HepG2 (cell line): ENCODE measurements at regions of chr16 and their contacts with region 1.

Region 1: GRCh38 chr16:84726079-84726668 is 26.4 kb downstream of the USP10 start:
- DNase-seq: peak; percentile 70
- ATAC-seq: peak; percentile 91
- H3K4me3 ChIP-seq: peak overlapping the region; percentile 37 to 69 (median 46)
- H3K27ac ChIP-seq: peak overlapping the region; percentile 45
- H3K4me1 ChIP-seq: peaks cover 93% of the 10 kb centered on the region
- H3K27me3 ChIP-seq: no peaks in the 10 kb centered on the region
- CTCF ChIP-seq: peak; percentile 97
- EP300 ChIP-seq: no peak
- POLR2A ChIP-seq: no peak
- RAD21 ChIP-seq: peak; percentile 89

Region 2: GRCh38 chr16:84511180-84511824 is 214.9 kb before region 1 on chr16:
- CTCF ChIA-PET with region 1: interaction called, 7 read pairs
- POLR2A ChIA-PET with region 1: no interaction called
- in situ Hi-C with region 1: loop called (anchors 10 kb)
- intact Hi-C with region 1: loop called (anchors 5 kb)
- DNase-seq: peak; percentile 68
- ATAC-seq: peak; percentile 65
- H3K4me3 ChIP-seq: no peak overlapping the region
- H3K27ac ChIP-seq: no peak overlapping the region
- H3K4me1 ChIP-seq: peaks cover 37% of the 10 kb centered on the region
- H3K27me3 ChIP-seq: no peaks in the 10 kb centered on the region; a peak in 1 of 5 replicates
- CTCF ChIP-seq: peak; percentile 98
- EP300 ChIP-seq: no peak
- POLR2A ChIP-seq: no peak
- RAD21 ChIP-seq: peak; percentile 91

Region 3: GRCh38 chr16:84617791-84618580 is 108.2 kb before region 1 on chr16 and contains the start of gene COTL1:
- CTCF ChIA-PET with region 1: interaction called, 38 read pairs
- POLR2A ChIA-PET with region 1: no interaction called
- in situ Hi-C with region 1: loop called (anchors 5 kb)
- intact Hi-C with region 1: loop called (anchors 1 kb)
- DNase-seq: peak; percentile 87
- ATAC-seq: peak; percentile 76
- H3K4me3 ChIP-seq: peak within 1 kb of the TSS; percentile 76 to 89 (median 85)
- H3K27ac ChIP-seq: no peak within 1 kb of the TSS
- H3K4me1 ChIP-seq: peaks cover 52% of the 10 kb centered on the region
- H3K27me3 ChIP-seq: no peaks in the 10 kb centered on the region; a peak in 1 of 5 replicates
- CTCF ChIP-seq: no peak
- EP300 ChIP-seq: no peak; a peak in 1 of 4 replicates
- POLR2A ChIP-seq: peak in 1 of 2 experiments; percentile 58; a peak in 1 of 4 replicates
- RAD21 ChIP-seq: peak; percentile 32; the same call in 1 of the 2 replicates
- total RNA-seq, gene COTL1: 8.6 and 8.7 TPM in 2 replicates

Region 4: GRCh38 chr16:84643180-84643583 is 83.0 kb before region 1 on chr16:
- CTCF ChIA-PET with region 1: interaction called, 3 read pairs
- POLR2A ChIA-PET with region 1: no interaction called
- in situ Hi-C with region 1: no loop called
- intact Hi-C with region 1: loop called (anchors 1 kb)
- DNase-seq: peak; percentile 35
- ATAC-seq: peak; percentile 38
- H3K4me3 ChIP-seq: peak overlapping the region in 1 of 3 experiments; percentile 30; a peak in 1 of 6 replicates
- H3K27ac ChIP-seq: no peak overlapping the region
- H3K4me1 ChIP-seq: peaks cover 50% of the 10 kb centered on the region
- H3K27me3 ChIP-seq: peaks cover 0 to 34% of the 10 kb centered on the region in 2 experiments; a peak in 2 of 5 replicates
- CTCF ChIP-seq: no peak
- EP300 ChIP-seq: no peak
- POLR2A ChIP-seq: no peak
- RAD21 ChIP-seq: no peak

Region 5: DNA sequence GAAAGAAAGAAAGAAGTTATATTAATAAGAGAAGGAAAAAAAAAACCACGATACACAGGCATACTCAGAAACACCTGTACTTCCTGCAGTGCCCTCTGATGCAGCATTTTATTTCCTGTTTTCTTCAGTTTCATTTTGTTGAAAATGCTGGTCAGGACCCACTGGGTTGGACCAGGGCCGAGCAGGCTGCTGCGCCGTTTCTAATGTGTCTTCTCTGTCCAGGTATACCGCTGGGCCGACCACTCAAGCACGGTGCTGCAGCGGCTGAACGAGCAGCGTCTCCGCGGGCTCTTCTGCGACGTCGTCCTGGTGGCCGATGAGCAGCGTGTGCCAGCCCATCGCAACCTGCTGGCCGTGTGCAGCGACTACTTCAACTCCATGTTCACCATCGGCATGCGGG is 69.5 kb before region 1 on chr16:
- CTCF ChIA-PET with region 1: no interaction called
- POLR2A ChIA-PET with region 1: no interaction called
- in situ Hi-C with region 1: no loop called
- intact Hi-C with region 1: no loop called
- DNase-seq: no peak
- ATAC-seq: no peak
- H3K4me3 ChIP-seq: no peak overlapping the region
- H3K27ac ChIP-seq: no peak overlapping the region
- H3K4me1 ChIP-seq: no peaks in the 10 kb centered on the region
- H3K27me3 ChIP-seq: no peaks in the 10 kb centered on the region
- CTCF ChIP-seq: no peak
- EP300 ChIP-seq: no peak
- POLR2A ChIP-seq: no peak
- RAD21 ChIP-seq: no peak

Region 6: DNA sequence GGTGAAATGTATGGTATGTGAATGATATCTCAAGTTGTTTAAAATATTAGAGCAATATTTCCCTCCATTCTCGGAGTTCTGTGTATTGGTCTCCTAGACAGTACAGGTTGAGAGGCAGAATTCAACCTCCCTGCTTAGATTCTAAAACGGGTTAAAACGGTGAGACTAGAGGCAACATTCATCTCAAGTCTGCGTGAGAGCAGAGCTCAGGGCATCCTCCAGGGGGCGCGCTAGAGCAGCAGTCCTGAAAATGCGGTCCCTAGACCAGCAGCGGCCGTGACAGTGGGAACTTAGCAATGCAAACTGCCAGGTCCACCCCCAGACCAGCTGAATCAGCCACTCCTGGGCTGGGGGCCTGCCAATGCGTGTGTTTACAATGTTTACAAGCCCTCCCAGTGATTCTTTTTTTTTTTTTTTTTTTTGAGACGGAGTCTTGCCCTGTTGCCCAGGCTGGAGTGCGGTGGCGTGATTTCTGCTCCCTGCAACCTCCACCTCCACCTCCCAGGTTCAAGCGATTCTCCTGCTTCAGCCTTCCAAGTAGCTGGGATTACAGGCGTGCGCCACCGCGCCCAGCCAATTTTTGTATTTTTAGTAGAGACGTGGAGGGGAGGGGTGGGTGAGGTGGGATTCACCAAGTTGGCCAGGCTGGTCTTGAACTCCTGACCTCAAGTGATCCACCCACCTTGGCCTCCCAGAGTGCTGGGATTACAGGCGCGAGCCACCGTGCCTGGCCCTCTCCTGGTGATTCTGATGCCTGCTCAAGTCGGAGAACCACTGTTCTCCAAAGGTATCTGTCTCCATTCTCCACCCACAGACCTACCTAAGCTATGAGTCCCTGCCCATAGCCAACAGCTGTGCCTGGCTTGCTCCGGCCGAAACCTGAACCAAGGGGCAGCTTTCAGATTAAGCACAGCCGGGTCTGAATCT is 53.6 kb before region 1 on chr16:
- CTCF ChIA-PET with region 1: interaction called, 69 read pairs
- POLR2A ChIA-PET with region 1: interaction called, 4 read pairs
- in situ Hi-C with region 1: loop called (anchors 5 kb)
- intact Hi-C with region 1: loop called (anchors 1 kb)
- DNase-seq: peak; percentile 58
- ATAC-seq: peak; percentile 82
- H3K4me3 ChIP-seq: 0 out of 6 replicates have a peak overlapping the region, but pooled peaks of 1 of the 3 experiments have one; percentile 29
- H3K27ac ChIP-seq: no peak overlapping the region
- H3K4me1 ChIP-seq: peaks cover 34% of the 10 kb centered on the region
- H3K27me3 ChIP-seq: 0 out of 5 replicates have a peak, but pooled peaks cover 0 to 21% of the 10 kb centered on the region in 2 experiments
- CTCF ChIP-seq: peak; percentile 95
- EP300 ChIP-seq: no peak
- POLR2A ChIP-seq: no peak
- RAD21 ChIP-seq: peak; percentile 86

Region 7: DNA sequence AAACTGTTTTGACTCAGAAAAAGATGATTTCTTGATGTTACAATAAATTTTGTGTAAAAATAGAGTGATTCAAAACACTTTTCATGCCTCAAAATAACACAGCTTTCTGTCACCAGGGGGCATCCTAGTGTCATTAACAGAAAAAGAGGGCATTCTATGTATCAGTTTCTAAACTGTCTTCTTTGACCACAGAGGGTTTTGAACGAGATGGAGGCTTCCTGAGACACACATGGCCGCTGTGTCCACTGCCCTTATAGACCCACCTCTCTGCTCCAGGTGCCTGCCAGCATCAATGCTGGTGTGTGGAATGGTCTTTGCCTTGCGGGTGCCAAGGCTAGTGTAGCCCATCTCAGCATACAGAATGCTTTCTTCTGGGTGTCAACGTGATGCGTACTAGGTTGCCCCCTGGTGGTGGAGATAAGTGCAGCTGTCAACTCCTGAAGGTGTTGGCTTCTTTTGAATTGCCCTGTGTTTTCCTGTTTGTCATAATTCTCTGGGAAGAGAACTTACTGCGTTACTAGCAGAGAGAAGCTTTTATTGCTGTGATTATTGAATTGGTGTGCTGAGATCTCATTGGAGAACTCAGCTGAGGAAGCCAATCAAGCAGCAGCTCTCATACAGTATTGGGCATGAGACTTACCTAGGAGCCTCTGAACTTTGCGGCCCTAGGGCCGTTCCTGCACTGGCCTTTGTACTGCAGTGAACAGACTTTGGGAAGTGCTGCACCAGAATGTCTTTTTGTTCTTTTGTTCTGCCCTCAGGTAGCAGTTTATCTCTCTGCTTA is 12.3 kb after region 1 on chr16:
- CTCF ChIA-PET with region 1: interaction called, 10 read pairs
- POLR2A ChIA-PET with region 1: interaction called, 5 read pairs
- in situ Hi-C with region 1: no loop called
- intact Hi-C with region 1: no loop called
- DNase-seq: peak; percentile 78
- ATAC-seq: peak; percentile 76
- H3K4me3 ChIP-seq: no peak overlapping the region
- H3K27ac ChIP-seq: peak overlapping the region; percentile 7
- H3K4me1 ChIP-seq: peaks cover 66% of the 10 kb centered on the region
- H3K27me3 ChIP-seq: no peaks in the 10 kb centered on the region
- CTCF ChIP-seq: peak; percentile 93
- EP300 ChIP-seq: no peak
- POLR2A ChIP-seq: no peak
- RAD21 ChIP-seq: peak; percentile 39

Region 8: DNA sequence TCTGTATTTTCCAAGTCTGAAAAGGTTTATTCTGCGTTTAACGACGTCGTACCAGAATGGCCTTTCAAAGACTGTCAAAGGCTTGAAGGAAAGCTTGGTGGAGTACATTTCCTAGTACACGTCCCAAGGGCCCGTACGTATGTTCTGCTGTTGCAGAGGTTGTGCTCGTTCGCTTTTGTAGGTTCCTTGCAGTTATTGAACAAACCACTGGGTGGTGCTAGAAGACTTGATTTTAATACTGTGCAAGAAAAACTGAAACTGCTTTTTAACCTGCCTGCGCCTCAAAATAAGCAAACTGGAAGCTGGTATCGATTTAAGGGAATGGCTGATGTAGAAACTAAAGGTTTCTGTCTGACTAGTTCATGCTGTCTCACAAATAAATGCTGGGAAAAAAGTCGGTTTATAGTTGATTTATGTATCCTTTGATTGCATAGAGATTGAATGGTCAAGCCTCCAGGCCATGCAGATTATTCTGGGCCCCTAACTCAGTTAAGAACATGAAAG is 28.2 kb after region 1 on chr16:
- CTCF ChIA-PET with region 1: no interaction called
- POLR2A ChIA-PET with region 1: no interaction called
- in situ Hi-C with region 1: no loop called
- intact Hi-C with region 1: no loop called
- DNase-seq: peak; percentile 83
- ATAC-seq: peak; percentile 89
- H3K4me3 ChIP-seq: no peak overlapping the region
- H3K27ac ChIP-seq: no peak overlapping the region
- H3K4me1 ChIP-seq: peaks cover 24% of the 10 kb centered on the region
- H3K27me3 ChIP-seq: no peaks in the 10 kb centered on the region
- CTCF ChIP-seq: peak; percentile 84
- EP300 ChIP-seq: no peak
- POLR2A ChIP-seq: no peak
- RAD21 ChIP-seq: peak; percentile 79